Activated CD8-positive, alpha-beta T cell treated with anti-CD3 and anti-CD28 coated beads, Interleukin-2, amount 10 ng/mL, durations not matched to agents 7 days and 5 days (primary cell): ENCODE measurements at regions of chr1 and their contacts with region 1.

Region 1: GRCh38 chr1:11907275-11908094 is 18.7 kb downstream of the KIAA2013 start:
- DNase-seq: peak; percentile 94
- ATAC-seq: peak; percentile 47
- H3K4me3 Mint-ChIP-seq: peak overlapping the region; percentile 81
- H3K27ac Mint-ChIP-seq: peak overlapping the region; percentile 100
- H3K4me1 Mint-ChIP-seq: peaks cover 56% of the 10 kb centered on the region
- H3K27me3 Mint-ChIP-seq: peaks cover 5% of the 10 kb centered on the region

Region 2: GRCh38 chr1:11661103-11661502 is 246.4 kb before region 1 on chr1:
- CTCF ChIA-PET with region 1: interaction called, 3 read pairs
- POLR2A ChIA-PET with region 1: interaction called, 35 read pairs
- DNase-seq: no peak
- ATAC-seq: no peak
- H3K4me3 Mint-ChIP-seq: no peak overlapping the region
- H3K27ac Mint-ChIP-seq: no peak overlapping the region
- H3K4me1 Mint-ChIP-seq: peaks cover 23% of the 10 kb centered on the region
- H3K27me3 Mint-ChIP-seq: no peaks in the 10 kb centered on the region

Region 3: DNA sequence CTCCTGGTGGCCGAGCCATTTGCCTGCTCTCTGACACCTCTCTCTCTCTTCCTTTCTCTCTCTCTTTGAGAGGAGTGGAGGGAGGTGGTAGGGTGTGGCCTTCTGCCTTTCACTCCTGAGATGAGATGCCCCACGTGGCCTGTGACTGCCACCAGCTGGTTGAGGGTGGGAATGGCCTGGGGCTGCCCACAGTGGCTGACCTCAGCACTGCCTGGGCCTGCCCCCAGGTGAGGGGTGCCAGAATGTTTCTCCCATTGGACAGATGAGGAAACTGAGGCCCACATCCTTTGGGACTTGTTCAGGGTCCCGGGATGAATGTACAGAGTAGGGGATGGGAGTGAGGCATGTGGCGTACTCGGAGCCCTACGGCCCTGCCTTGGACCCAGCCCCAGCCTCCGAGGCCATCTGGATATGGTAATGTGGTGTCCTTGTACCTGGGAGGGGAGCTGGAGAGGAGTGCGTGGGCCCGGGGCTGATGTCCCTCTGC is 158.2 kb before region 1 on chr1:
- CTCF ChIA-PET with region 1: no interaction called
- POLR2A ChIA-PET with region 1: no interaction called
- DNase-seq: peak; percentile 84
- ATAC-seq: peak; percentile 96
- H3K4me3 Mint-ChIP-seq: peak overlapping the region; percentile 20
- H3K27ac Mint-ChIP-seq: peak overlapping the region; percentile 88
- H3K4me1 Mint-ChIP-seq: peaks cover 47% of the 10 kb centered on the region
- H3K27me3 Mint-ChIP-seq: no peaks in the 10 kb centered on the region

Region 4: GRCh38 chr1:11838349-11839272 is 68.9 kb before region 1 on chr1:
- CTCF ChIA-PET with region 1: interaction called, 7 read pairs
- POLR2A ChIA-PET with region 1: interaction called, 209 read pairs
- DNase-seq: peak; percentile 81
- ATAC-seq: peak; percentile 94
- H3K4me3 Mint-ChIP-seq: no peak overlapping the region
- H3K27ac Mint-ChIP-seq: no peak overlapping the region
- H3K4me1 Mint-ChIP-seq: peaks cover 6% of the 10 kb centered on the region
- H3K27me3 Mint-ChIP-seq: no peaks in the 10 kb centered on the region

Region 5: GRCh38 chr1:11918779-11919519 is 11.5 kb after region 1 on chr1:
- CTCF ChIA-PET with region 1: no interaction called
- POLR2A ChIA-PET with region 1: interaction called, 170 read pairs
- DNase-seq: no peak
- ATAC-seq: no peak
- H3K4me3 Mint-ChIP-seq: no peak overlapping the region
- H3K27ac Mint-ChIP-seq: no peak overlapping the region
- H3K4me1 Mint-ChIP-seq: peaks cover 20% of the 10 kb centered on the region
- H3K27me3 Mint-ChIP-seq: no peaks in the 10 kb centered on the region

Region 6: DNA sequence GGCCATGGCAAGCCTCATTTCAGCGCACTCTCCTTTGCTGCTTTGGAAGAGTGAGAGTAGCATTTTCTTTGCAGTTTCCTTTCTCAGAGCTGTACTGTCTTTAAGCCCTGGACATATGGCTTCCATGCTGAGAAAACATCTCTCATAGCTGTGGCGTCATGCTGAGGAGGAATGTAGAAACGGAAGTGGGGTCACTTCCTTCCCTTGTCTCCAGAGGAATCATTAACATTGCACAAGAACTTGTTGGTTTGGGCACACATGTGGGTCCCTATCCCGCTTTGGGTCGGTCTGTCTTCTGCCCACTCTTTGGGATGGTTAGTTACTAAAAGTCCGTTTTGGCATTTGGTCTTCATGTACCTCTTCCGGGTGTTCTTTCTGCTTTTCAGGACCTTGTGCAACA is 78.4 kb after region 1 on chr1:
- CTCF ChIA-PET with region 1: interaction called, 6 read pairs
- POLR2A ChIA-PET with region 1: interaction called, 310 read pairs
- DNase-seq: no peak
- ATAC-seq: no peak
- H3K4me3 Mint-ChIP-seq: no peak overlapping the region
- H3K27ac Mint-ChIP-seq: peak overlapping the region; percentile 24
- H3K4me1 Mint-ChIP-seq: peaks cover 34% of the 10 kb centered on the region
- H3K27me3 Mint-ChIP-seq: no peaks in the 10 kb centered on the region

Region 7: DNA sequence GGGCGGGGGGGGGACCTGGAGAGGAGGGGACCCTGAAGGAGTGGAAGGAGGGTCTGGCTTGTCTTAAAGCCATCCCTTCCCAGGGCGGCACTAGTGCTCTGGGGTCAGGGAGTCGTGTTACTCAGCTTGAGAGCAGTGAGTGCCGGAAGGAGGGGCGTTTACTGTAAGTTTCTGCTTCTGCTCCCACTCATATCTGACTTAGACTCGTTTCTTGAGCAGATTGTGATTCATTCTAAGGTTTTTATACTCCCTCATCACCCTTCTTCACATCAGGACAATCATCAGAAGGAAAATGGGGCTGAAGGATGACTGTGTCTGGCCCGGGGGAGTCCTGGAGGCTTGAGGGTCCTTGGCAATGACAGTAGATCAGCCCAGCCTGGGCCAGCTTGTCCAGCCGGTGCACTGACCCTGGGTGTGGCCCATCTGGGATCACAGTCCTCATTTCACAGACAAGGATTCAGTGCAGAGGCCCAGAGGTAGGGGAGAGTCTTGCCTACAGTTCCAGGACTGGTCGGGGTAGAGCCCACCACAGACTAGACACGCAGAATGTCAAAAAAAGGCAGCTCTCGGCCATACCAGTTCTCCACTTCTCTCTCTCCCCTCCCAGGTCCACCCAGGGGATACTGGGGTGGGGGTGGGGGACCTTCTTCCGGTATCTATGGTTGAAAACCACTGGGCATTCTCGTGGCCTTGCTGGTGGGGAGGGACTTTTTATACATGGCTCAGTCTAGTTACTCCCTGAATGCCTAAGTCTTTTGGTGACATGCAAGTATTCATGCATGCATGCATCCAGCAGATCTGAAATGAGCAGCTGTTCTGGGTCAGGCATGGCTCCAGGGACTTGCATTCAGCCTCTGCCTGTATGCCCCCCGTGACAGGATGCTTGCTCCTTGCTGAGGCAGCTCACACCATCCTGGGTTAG is 160.7 kb after region 1 on chr1:
- CTCF ChIA-PET with region 1: interaction called, 4 read pairs
- POLR2A ChIA-PET with region 1: interaction called, 95 read pairs
- DNase-seq: peak; percentile 50
- ATAC-seq: no peak
- H3K4me3 Mint-ChIP-seq: no peak overlapping the region
- H3K27ac Mint-ChIP-seq: peak overlapping the region; percentile 44
- H3K4me1 Mint-ChIP-seq: peaks cover 57% of the 10 kb centered on the region
- H3K27me3 Mint-ChIP-seq: peaks cover 44% of the 10 kb centered on the region

Region 8: GRCh38 chr1:12166834-12167492 is 259.5 kb after region 1 on chr1 and contains the start of gene TNFRSF1B:
- CTCF ChIA-PET with region 1: no interaction called
- POLR2A ChIA-PET with region 1: interaction called, 14 read pairs
- DNase-seq: peak; percentile 74
- ATAC-seq: peak; percentile 67
- H3K4me3 Mint-ChIP-seq: peak within 1 kb of the TSS; percentile 100
- H3K27ac Mint-ChIP-seq: peak within 1 kb of the TSS; percentile 97
- H3K4me1 Mint-ChIP-seq: peaks cover 77% of the 10 kb centered on the region
- H3K27me3 Mint-ChIP-seq: no peaks in the 10 kb centered on the region
- total RNA-seq, gene TNFRSF1B: 274 to 284 TPM